ENCODE measurements at regions of chr7 and their contacts with region 1.

Region 1: DNA sequence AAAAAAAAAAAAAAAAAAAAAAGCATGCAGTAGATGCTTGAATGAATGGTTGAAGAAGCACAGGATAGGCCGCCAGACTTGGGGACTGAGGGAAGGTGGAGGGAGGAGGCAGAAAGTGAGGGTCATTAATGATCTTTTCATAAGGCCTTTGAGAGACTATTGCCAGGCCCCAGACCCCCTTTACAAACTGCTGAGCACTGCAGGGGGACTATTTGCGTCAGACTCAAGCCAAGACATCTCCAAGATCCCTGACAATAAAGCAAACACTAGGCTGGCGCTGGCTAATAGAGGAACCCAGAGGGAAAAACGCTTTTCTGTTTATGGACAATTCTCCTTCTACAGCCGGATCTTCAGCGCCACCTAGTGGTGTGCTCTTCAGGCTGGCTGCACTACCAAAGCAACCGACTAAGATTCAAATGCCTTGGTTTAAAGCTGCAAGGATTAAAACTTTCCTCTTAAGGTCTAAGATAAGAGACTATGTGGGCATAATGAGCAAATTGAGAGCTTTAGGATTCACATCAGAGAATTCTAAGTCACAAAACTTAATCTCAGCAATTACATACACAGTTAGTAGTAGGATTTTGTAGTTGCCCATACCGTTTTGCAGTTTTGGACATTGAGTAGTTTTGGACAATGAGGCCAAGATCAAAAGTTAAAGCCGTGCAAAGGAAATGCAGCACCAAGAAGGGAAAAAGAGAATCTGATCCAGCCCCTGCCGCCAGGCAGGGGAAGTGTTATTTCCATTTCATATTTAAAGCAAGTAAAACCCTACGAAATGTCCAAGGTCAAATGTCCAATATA is 17.9 kb upstream of the AGK start:
- DNase-seq: peak; percentile 72
- H3K4me3 ChIP-seq: no peak overlapping the region
- H3K27ac ChIP-seq: no peak overlapping the region
- H3K4me1 ChIP-seq: no peaks in the 10 kb centered on the region
- CTCF ChIP-seq: peak; percentile 98

Region 2: DNA sequence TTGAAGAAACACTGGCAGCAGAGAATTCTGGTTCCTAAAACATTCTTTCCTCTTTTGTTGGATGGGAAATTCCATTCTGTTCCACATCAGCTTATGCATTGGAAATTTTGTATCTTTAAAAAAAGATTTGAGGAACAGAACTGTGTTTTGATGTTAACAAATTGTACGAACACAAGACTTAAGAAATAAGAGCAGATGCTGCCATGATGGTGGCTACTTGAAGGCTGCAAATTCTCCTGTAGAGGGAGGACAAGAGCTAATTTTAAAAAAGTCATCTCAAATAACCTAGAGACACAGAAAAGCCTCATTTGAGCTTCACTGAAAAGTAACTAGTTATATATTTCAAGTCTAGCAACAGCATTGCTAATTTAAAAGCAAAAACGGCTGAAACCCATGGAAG is 807.1 kb before region 1 on chr7:
- CTCF ChIA-PET with region 1: no interaction called
- POLR2A ChIA-PET with region 1: no interaction called
- intact Hi-C with region 1: loop called (anchors 10 kb)
- DNase-seq: peak; percentile 24
- H3K4me3 ChIP-seq: no peak overlapping the region
- H3K27ac ChIP-seq: no peak overlapping the region
- H3K4me1 ChIP-seq: no peaks in the 10 kb centered on the region
- CTCF ChIP-seq: peak; percentile 68

Region 3: GRCh38 chr7:140810830-140811556 is 722.4 kb before region 1 on chr7:
- CTCF ChIA-PET with region 1: no interaction called
- POLR2A ChIA-PET with region 1: no interaction called
- intact Hi-C with region 1: loop called (anchors 5 kb)
- DNase-seq: peak; percentile 69
- H3K4me3 ChIP-seq: no peak overlapping the region
- H3K27ac ChIP-seq: no peak overlapping the region
- H3K4me1 ChIP-seq: no peaks in the 10 kb centered on the region
- CTCF ChIP-seq: peak; percentile 90

Region 4: DNA sequence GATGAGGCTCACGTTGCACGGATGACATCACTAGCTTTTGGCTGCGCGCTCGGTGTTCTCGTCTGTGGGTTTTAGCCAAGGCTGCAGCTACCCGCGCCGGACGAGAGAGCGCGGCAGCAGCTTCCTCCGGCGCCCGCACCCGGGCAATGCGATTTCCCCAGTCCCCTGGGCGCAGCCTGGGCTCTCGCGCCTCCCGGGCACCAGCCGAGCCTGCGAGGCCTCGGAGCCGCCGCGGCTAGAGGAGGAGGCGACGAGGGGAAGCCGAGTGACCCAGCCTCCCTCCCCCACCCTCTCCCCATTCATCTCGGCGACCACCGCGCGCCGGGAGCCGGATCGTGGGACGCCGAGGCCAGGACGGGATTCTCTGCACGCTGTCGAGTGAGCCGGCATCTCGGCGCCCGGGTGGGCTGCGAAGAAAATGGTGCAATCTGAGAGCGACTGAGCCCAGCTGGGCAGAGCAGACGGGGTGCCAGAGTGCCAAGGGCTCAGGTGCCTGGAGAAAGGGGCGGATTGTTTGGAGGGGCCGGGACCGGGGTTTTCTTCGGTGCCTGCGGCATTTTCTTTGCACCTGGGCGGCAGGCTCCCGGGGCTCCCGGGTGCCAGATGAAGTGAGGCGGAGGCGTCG is 460.7 kb before region 1 on chr7:
- CTCF ChIA-PET with region 1: no interaction called
- POLR2A ChIA-PET with region 1: no interaction called
- intact Hi-C with region 1: loop called (anchors 5 kb)
- DNase-seq: no peak
- H3K4me3 ChIP-seq: no peak overlapping the region
- H3K27ac ChIP-seq: no peak overlapping the region
- H3K4me1 ChIP-seq: no peaks in the 10 kb centered on the region
- CTCF ChIP-seq: no peak

Region 5: DNA sequence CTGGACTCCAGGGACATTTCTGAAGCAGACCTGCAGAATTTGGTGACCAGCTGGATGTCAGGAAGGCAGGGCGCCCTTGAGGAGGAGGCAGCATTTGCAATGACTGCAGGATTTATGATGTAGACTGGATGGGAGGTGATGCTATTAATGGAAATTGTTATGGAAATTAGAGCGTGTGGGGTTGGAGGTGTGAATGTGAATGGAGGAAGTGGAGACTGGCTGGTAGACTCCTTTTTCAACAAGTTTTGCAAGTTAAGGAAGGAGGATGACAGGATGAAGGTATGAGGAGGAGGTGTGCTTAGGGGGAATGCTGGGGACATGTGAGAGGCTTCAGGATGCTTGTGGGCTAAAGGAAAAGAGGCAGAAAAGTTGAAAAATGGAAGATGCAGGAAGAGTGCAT is 322.5 kb before region 1 on chr7:
- CTCF ChIA-PET with region 1: no interaction called
- POLR2A ChIA-PET with region 1: no interaction called
- intact Hi-C with region 1: loop called (anchors 10 kb)
- DNase-seq: no peak
- H3K4me3 ChIP-seq: no peak overlapping the region
- H3K27ac ChIP-seq: no peak overlapping the region
- H3K4me1 ChIP-seq: no peaks in the 10 kb centered on the region
- CTCF ChIP-seq: no peak

Region 6: DNA sequence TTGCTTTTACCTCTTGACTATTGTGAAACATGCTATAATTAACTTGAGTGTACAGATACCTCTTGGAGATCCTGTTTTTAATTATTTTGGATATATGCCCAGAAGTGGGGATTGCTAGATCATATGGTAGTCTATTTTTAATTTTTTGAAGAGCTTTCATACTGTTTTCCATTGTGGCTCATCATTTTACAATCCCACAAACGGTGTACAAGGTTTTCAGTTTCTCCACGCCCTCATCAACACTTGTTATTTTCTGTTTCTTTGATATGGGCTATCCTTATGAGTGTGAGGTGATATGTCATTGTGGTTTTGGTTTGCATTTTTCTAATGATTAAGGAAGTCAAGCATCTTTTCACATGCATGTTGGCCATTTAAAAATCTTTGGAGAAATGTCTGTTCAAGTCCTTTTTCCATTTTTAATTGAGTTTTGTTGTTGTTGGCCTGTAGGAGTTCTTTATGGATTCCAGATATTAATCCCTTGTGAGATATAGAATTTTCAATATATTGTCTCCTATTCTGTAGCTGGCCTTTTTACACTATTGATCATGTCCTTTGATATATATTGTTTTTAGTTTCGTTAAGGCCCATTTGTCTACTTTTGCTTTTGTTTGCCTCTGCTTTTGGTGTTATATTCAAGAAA is 25.3 kb after region 1 on chr7:
- CTCF ChIA-PET with region 1: no interaction called
- POLR2A ChIA-PET with region 1: no interaction called
- intact Hi-C with region 1: no loop called
- DNase-seq: no peak
- H3K4me3 ChIP-seq: no peak overlapping the region
- H3K27ac ChIP-seq: no peak overlapping the region
- H3K4me1 ChIP-seq: no peaks in the 10 kb centered on the region
- CTCF ChIP-seq: no peak

Region 7: GRCh38 chr7:141654551-141654950 is 121.2 kb after region 1 on chr7:
- CTCF ChIA-PET with region 1: no interaction called
- POLR2A ChIA-PET with region 1: no interaction called
- intact Hi-C with region 1: no loop called
- DNase-seq: peak; percentile 61
- H3K4me3 ChIP-seq: no peak overlapping the region
- H3K27ac ChIP-seq: no peak overlapping the region
- H3K4me1 ChIP-seq: peaks cover 1% of the 10 kb centered on the region
- CTCF ChIP-seq: peak; percentile 88

Measured in OCI-LY7 (cell line).